Activated CD8-positive, alpha-beta T cell treated with anti-CD3 and anti-CD28 coated beads, Interleukin-2, amount 10 ng/mL, durations not matched to agents 7 days and 5 days (primary cell): ENCODE measurements at regions of chr15 and their contacts with region 1.

Region 1: DNA sequence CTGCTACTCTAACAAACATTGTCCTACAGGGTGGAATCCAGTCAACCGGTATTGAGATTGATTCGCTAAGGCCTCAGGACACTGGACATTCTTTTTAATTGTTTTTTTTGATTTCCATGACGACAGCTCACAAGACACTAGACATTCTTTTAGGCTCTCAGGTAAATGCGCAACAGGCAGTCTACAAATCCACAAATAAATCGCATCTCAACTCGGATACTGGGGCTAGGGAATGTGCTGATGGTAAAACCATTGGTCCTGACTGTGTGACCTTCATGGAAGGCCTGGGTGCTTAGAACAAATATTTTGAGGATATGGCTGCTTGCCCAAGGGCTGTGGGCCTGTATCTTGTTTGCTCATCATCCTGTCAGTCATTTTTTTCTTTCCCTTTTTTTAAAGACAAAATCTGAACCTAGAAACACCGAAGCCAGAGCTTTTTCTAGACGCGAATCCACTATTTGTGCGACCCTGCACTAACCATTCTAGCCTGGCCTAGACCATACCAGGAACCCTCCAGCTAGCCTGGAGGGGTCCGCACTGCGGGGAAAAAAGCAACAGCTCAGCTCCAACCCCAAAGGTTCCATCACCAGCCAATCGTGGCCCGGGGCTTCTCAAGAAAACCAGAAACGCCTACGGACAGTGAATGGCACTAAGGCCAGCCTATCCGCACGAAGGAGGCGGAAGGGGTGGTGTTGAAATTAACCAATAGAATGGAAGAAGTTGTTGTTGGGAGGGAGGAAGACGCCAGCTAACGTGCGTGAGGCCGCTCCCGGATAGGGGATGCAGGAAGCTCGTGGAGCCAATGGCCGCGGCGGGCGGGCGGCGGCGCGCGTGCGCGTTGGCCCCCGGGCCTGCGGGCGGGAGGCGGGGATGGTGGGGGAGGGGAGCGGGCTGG is 18.1 kb upstream of the CHD2 start:
- DNase-seq: peak; percentile 99
- ATAC-seq: peak; percentile 94
- H3K4me3 Mint-ChIP-seq: peak overlapping the region; percentile 92
- H3K27ac Mint-ChIP-seq: peak overlapping the region; percentile 98
- H3K4me1 Mint-ChIP-seq: peaks cover 61% of the 10 kb centered on the region
- H3K27me3 Mint-ChIP-seq: no peaks in the 10 kb centered on the region

Region 2: GRCh38 chr15:92753591-92753990 is 128.5 kb before region 1 on chr15:
- CTCF ChIA-PET with region 1: no interaction called
- POLR2A ChIA-PET with region 1: no interaction called
- DNase-seq: no peak
- ATAC-seq: no peak
- H3K4me3 Mint-ChIP-seq: no peak overlapping the region
- H3K27ac Mint-ChIP-seq: no peak overlapping the region
- H3K4me1 Mint-ChIP-seq: no peaks in the 10 kb centered on the region
- H3K27me3 Mint-ChIP-seq: peaks cover 8% of the 10 kb centered on the region

Region 3: GRCh38 chr15:92820236-92821021 is 61.6 kb before region 1 on chr15:
- CTCF ChIA-PET with region 1: interaction called, 29 read pairs
- POLR2A ChIA-PET with region 1: interaction called, 130 read pairs
- DNase-seq: peak; percentile 89
- ATAC-seq: peak; percentile 85
- H3K4me3 Mint-ChIP-seq: peak overlapping the region; percentile 75
- H3K27ac Mint-ChIP-seq: peak overlapping the region; percentile 79
- H3K4me1 Mint-ChIP-seq: peaks cover 58% of the 10 kb centered on the region
- H3K27me3 Mint-ChIP-seq: no peaks in the 10 kb centered on the region

Region 4: DNA sequence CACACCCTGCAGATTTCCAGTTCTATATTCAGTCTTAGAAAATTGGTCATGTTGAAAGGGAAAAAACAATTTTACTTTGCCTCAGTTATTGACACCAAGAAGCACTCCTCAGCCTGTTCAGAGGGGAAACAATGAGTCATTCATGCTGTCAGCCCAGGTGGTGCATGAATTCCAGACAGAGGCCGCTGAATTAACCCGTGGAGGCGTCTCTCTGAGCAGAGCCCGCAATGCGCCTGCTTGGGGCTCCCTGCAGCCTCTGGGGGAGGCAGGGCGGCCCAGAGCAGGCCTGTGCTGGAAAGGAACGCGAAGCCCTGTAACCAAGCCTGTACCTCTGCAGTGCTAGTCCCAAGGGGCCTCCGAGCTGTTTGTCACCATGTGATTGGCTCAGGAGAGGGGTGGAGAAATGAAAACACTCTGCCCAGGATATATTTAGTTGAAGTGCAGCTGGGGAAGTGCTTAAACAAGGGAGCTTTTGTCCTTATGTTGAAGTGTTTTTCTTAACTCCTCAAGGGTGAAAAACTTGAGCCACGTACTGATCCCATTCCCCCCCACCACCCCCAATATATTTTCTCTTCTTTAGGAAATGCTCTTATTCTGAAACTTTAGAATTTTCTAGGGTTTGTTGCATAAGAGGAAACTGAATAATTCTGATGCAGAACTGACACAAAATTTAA is 50.3 kb before region 1 on chr15:
- CTCF ChIA-PET with region 1: interaction called, 56 read pairs
- POLR2A ChIA-PET with region 1: interaction called, 228 read pairs
- DNase-seq: peak; percentile 94
- ATAC-seq: peak; percentile 99
- H3K4me3 Mint-ChIP-seq: peak overlapping the region; percentile 73
- H3K27ac Mint-ChIP-seq: peak overlapping the region; percentile 95
- H3K4me1 Mint-ChIP-seq: peaks cover 56% of the 10 kb centered on the region
- H3K27me3 Mint-ChIP-seq: no peaks in the 10 kb centered on the region

Region 5: GRCh38 chr15:92845126-92845508 is 36.9 kb before region 1 on chr15:
- CTCF ChIA-PET with region 1: interaction called, 6 read pairs
- POLR2A ChIA-PET with region 1: interaction called, 93 read pairs
- DNase-seq: no peak
- ATAC-seq: peak; percentile 16
- H3K4me3 Mint-ChIP-seq: peak overlapping the region; percentile 57
- H3K27ac Mint-ChIP-seq: peak overlapping the region; percentile 93
- H3K4me1 Mint-ChIP-seq: peaks cover 70% of the 10 kb centered on the region
- H3K27me3 Mint-ChIP-seq: no peaks in the 10 kb centered on the region

Region 6: DNA sequence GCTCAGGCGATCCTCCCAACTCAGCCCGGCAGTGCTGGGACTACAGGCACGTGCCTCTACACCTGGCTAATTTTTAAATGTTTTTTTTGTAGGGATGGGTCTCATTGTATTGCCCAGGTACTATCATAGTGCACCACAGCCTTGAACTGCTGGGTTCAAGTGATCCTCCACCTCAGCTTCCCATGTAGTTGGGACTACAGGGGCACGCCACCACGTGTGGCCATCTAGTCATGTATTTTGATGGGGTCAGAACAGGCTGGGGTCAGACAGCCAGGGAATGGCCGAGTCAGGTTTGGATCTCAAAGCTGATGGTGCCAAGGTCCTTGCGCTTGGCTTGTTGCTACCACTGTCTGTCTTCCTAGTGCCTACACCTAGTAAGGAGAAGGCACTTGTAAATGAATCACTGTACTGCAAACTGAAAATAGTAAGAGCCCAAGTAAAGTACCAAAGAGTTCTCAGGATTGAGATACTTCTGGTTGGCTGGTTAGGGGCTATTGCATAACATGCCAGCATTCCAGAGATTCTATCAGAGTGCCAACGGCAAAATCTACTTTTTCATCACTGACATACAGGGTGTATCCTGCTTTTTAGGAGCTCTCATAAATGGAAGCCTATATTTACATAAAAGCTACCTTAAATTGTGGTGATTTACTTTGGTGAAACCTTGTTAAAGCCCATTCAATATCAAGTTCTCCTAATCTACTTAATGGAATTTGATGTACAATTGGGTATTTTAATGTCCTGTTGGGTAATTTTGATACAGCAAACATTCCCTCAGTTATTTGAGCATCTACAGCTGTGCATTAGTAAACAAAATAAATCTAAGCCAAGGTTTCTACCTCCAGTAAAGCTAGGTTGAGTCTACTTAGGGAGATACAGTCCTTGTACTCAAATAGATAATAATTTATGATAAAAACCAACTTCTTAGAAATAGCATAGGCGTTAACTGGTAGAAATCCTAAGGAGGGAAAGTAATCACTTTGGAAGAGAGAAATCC is 12.8 kb before region 1 on chr15:
- CTCF ChIA-PET with region 1: interaction called, 3 read pairs
- POLR2A ChIA-PET with region 1: interaction called, 13 read pairs
- DNase-seq: no peak
- ATAC-seq: no peak
- H3K4me3 Mint-ChIP-seq: no peak overlapping the region
- H3K27ac Mint-ChIP-seq: no peak overlapping the region
- H3K4me1 Mint-ChIP-seq: no peaks in the 10 kb centered on the region
- H3K27me3 Mint-ChIP-seq: no peaks in the 10 kb centered on the region

Region 7: DNA sequence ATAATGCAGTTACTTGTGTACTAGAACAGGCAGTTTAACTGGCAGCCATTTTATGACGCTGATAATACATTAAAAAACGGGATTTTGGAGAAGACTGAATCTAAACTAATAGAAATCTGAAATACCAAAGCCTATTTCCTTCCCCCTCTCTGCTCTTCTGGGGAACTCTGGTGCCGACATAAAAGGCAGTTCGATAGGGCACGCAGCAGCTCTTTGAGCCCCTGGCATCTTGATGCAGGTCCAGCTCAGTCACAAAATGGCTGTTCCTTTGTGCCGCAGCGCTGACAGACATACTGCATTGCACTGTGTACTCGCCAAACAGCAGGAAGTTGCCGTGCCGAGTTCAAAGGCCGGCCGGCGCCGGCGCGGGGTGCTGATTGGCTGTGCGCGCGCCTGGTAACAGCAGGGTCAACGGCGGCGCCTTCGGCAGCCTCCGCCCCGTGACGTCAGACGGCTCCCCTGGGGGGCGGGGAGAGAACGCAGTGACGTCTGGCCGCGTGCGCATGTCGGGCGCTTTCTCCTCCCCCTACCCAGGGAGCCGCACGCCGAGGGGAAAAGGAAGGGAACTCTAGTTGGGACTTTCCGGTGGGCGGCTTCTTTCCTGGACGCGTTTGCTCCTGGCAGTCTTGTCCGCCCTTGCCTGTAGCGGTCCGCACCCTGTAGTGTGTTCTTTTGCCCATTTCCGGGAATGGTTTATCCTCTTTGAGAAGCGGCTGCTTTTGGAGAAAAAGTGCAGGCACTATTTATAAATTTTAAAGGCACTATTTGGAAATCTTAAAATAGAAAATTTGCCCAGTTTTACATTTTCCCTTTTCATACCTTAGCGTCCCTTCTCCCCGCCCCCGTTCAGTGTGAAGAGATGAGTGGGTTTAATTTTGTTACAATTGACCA is 22.1 kb after region 1 on chr15:
- CTCF ChIA-PET with region 1: interaction called, 80 read pairs
- POLR2A ChIA-PET with region 1: interaction called, 594 read pairs
- DNase-seq: peak; percentile 99
- ATAC-seq: peak; percentile 87
- H3K4me3 Mint-ChIP-seq: peak overlapping the region; percentile 83
- H3K27ac Mint-ChIP-seq: peak overlapping the region; percentile 98
- H3K4me1 Mint-ChIP-seq: peaks cover 57% of the 10 kb centered on the region
- H3K27me3 Mint-ChIP-seq: no peaks in the 10 kb centered on the region